Activated CD4-positive, alpha-beta memory T cell treated with anti-CD3 and anti-CD28 coated beads for 36 hours (primary cell): ENCODE measurements at regions of chr1 and their contacts with region 1.

Region 1: GRCh38 chr1:226083302-226084101 is 21.0 kb downstream of the H3-3A start:
- DNase-seq: peak; percentile 93
- H3K4me3 Mint-ChIP-seq: peak overlapping the region; percentile 86
- H3K27ac Mint-ChIP-seq: no peak overlapping the region
- H3K4me1 Mint-ChIP-seq: peaks cover 8% of the 10 kb centered on the region
- H3K27me3 Mint-ChIP-seq: no peaks in the 10 kb centered on the region

Region 2: GRCh38 chr1:226100436-226101391 is 17.2 kb after region 1 on chr1:
- CTCF ChIA-PET with region 1: interaction called, 3 read pairs
- POLR2A ChIA-PET with region 1: interaction called, 5 read pairs
- intact Hi-C with region 1: loop called (anchors 2 kb)
- DNase-seq: peak; percentile 52
- H3K4me3 Mint-ChIP-seq: peak overlapping the region; percentile 76
- H3K27ac Mint-ChIP-seq: no peak overlapping the region
- H3K4me1 Mint-ChIP-seq: peaks cover 17% of the 10 kb centered on the region
- H3K27me3 Mint-ChIP-seq: peaks cover 3% of the 10 kb centered on the region

Region 3: GRCh38 chr1:226109829-226110248 is 26.3 kb after region 1 on chr1:
- CTCF ChIA-PET with region 1: no interaction called
- POLR2A ChIA-PET with region 1: interaction called, 14 read pairs
- intact Hi-C with region 1: loop called (anchors 2 kb)
- DNase-seq: peak; percentile 89
- H3K4me3 Mint-ChIP-seq: peak overlapping the region; percentile 76
- H3K27ac Mint-ChIP-seq: peak overlapping the region; percentile 79
- H3K4me1 Mint-ChIP-seq: peaks cover 15% of the 10 kb centered on the region
- H3K27me3 Mint-ChIP-seq: no peaks in the 10 kb centered on the region